ENCODE measurements at regions of chr1 and their contacts with region 1.

Region 1: DNA sequence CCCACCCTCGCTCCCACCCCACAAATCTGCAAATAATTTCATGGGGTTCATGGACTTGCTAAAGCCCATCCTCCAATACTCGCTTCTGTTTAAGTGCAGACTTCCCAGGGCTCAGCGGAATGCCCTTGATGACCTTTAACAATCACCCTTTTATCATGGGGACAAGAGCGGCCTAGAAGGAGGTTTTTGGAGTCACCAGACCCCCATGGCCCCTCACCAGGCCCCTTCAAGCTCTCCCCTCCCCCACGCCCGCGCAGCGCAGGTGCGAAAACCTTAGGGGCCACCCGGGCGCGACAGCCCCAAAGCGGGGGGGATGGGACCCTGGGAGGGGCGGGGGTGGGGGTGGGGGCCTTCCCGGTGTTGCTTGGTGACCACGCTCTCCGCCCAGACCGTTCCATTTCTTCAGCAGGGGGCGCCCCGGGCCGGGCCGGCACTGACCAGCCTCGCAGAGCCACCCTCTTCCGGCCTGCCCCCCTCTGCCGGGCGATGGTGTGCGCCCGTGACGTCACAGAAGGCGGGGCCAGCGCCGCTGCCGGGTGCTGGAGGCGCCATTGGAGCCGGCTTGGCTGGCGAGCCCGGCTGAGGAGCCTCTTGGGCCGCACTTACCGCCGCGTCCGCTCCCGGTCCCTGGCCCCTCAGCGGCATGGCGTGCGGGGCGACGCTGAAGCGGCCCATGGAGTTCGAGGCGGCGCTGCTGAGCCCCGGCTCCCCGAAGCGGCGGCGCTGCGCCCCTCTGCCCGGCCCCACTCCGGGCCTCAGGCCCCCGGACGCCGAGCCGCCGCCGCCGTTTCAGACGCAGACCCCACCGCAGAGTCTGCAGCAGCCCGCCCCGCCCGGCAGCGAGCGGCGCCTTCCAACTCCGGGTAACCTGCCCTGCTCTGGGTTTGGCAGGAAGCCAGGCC is at the start of gene AKIRIN1:
- DNase-seq: peak; percentile 99
- H3K4me3 ChIP-seq: peak within 1 kb of the TSS; percentile 97 to 100 (median 100)
- H3K27ac ChIP-seq: peak within 1 kb of the TSS; percentile 95 to 99 (median 98)
- H3K4me1 ChIP-seq: peaks cover 19 to 49% (median 40%) of the 10 kb centered on the region in 4 donors
- H3K27me3 ChIP-seq: no peaks in the 10 kb centered on the region
- CTCF ChIP-seq: peak in 2 of 3 experiments; percentile 14 to 45
- EP300 ChIP-seq: no peak
- POLR2A ChIP-seq: peak; percentile 97
- total RNA-seq, gene AKIRIN1: 59.0 to 93.1 (median 69.2) TPM

Region 2: DNA sequence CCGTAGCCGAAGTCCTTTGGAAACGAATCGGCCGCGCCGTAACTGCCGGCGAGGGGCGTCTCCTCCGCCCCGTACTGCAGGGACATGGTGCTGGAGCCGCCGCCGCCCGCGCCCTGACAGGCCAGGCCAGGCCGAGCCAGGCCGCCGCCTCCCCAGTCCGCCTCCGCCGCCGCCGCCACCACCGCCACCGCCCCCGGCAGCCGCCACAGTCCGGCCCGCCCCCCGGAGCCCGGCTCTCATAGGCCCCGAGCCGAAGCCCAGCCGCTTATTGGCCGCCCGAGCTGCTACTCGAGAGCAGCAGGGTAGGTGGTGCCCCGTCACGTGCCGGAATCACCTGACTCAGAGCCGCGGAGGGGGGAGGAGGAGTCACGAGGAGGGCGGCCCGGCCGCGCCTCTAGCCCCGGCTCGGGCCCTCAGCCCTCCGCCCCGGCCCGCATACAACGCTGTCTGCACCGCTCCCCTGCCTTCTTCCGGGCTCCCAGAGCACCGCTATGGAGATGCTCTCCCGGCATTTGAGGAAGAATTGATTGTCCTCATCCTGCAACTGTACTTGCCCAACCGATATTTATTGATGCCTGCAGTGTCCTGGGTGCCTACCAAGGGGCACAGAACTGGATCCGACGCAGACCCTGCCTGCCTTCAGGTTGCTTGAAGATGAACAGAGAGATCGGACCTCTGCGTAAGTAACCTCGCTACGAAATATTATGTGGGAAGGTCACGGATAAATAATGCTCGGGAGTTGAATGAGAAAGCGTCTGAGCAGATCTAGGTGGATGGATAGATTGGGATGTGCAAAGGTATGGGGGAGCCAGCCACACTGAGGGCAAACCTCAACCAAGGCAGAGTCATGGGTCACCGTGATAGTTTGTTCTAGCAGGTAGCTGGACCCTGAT is 131.2 kb before region 1 on chr1 and contains the start of gene RRAGC:
- intact Hi-C with region 1: loop called (anchors 5 kb)
- DNase-seq: peak; percentile 100
- H3K4me3 ChIP-seq: peak within 1 kb of the TSS; percentile 91 to 97 (median 94)
- H3K27ac ChIP-seq: peak within 1 kb of the TSS; percentile 88 to 96 (median 92)
- H3K4me1 ChIP-seq: peaks cover 25 to 70% (median 62%) of the 10 kb centered on the region in 4 donors
- H3K27me3 ChIP-seq: no peaks in the 10 kb centered on the region
- CTCF ChIP-seq: peak in 1 of 3 experiments; percentile 14
- EP300 ChIP-seq: peak; percentile 14
- POLR2A ChIP-seq: no peak
- total RNA-seq, gene RRAGC: 18.3 to 26.3 (median 22.4) TPM

Region 3: GRCh38 chr1:39026051-39026865 is 35.3 kb after region 1 on chr1 and contains the start of gene NDUFS5:
- intact Hi-C with region 1: loop called (anchors 5 kb)
- DNase-seq: peak; percentile 97
- H3K4me3 ChIP-seq: peak within 1 kb of the TSS; percentile 72 to 87 (median 79)
- H3K27ac ChIP-seq: peak within 1 kb of the TSS; percentile 89 to 98 (median 96)
- H3K4me1 ChIP-seq: peaks cover 22 to 45% (median 32%) of the 10 kb centered on the region in 4 donors
- H3K27me3 ChIP-seq: no peaks in the 10 kb centered on the region
- CTCF ChIP-seq: no peak
- EP300 ChIP-seq: no peak
- POLR2A ChIP-seq: peak; percentile 94
- total RNA-seq, gene NDUFS5: 274 to 655 (median 373) TPM

Measured in esophagus muscularis mucosa (tissue), 4 donors.